CD14-positive monocyte (primary cell): ENCODE measurements at regions of chr1 and their contacts with region 1.

Region 1: DNA sequence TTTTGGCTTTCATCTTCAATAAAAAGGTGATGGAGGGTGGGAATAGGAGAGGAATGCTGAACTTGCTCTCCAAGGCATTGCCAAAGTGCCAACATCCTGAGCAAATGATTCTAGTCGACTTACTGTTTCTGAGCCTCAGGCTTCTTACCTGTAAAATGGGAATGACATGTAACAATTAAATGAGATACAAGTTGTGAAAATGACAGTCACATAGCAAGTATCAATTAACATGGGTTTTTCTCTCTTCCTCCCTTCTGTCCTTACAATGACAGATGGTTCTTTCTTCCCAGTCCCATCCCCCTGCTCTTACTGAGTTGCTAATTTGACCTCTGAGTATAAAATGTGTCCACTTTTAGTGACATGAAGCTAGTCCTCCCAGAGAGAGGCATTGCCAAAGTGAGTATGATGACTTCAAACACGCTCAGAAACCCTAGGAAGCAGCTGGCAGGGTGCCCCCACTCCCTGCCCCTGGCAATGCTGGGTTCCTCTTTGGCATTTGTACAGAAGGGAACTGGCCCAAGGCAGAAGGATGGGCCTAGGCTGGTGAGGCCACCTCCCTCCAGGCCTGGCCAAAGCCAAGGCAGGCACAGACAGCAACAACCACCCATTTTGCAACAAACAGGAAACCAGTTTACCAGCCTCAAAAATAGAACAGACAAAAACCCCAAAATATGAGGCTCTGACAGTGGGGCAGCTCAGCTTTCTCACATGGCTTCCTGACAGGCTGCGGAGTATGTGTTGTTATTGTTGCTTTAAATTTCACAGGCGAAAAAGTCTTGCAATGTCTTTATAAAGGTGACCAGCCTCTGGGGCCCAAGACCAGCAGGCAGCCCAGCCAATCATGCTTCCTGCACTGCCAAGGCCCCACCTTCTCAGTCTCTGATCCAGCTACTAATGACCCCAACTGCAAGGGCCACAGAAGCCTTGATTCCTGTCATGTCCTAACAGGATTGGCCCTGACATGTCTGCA is 115.9 kb downstream of the HIVEP3 start:
- DNase-seq: peak; percentile 88 to 94 (median 93)
- H3K4me3 ChIP-seq: peak overlapping the region in 1 of 3 experiments; percentile 52
- H3K4me3 Mint-ChIP-seq: peak overlapping the region; percentile 55 to 68
- H3K27ac ChIP-seq: peak overlapping the region; percentile 86 to 95
- H3K27ac Mint-ChIP-seq: peak overlapping the region; percentile 93 to 98 (median 96)
- H3K4me1 ChIP-seq: peaks cover 62 to 78% of the 10 kb centered on the region in 2 donors
- H3K4me1 Mint-ChIP-seq: peaks cover 82% of the 10 kb centered on the region
- H3K27me3 ChIP-seq: no peaks in the 10 kb centered on the region
- H3K27me3 Mint-ChIP-seq: no peaks in the 10 kb centered on the region
- CTCF ChIP-seq: no peak

Region 2: GRCh38 chr1:41626616-41627375 is 176.0 kb before region 1 on chr1:
- intact Hi-C with region 1: no loop called
- DNase-seq: peak in 1 of 3 donors; percentile 21
- H3K4me3 ChIP-seq: no peak overlapping the region
- H3K4me3 Mint-ChIP-seq: no peak overlapping the region
- H3K27ac ChIP-seq: no peak overlapping the region
- H3K27ac Mint-ChIP-seq: peak overlapping the region in 3 of 7 donors; percentile 34 to 66 (median 46)
- H3K4me1 ChIP-seq: peaks cover 8 to 11% of the 10 kb centered on the region in 2 donors
- H3K4me1 Mint-ChIP-seq: peaks cover 20% of the 10 kb centered on the region
- H3K27me3 ChIP-seq: no peaks in the 10 kb centered on the region
- H3K27me3 Mint-ChIP-seq: peaks cover 0 to 3% (median 2%) of the 10 kb centered on the region in 3 donors
- CTCF ChIP-seq: no peak

Region 3: DNA sequence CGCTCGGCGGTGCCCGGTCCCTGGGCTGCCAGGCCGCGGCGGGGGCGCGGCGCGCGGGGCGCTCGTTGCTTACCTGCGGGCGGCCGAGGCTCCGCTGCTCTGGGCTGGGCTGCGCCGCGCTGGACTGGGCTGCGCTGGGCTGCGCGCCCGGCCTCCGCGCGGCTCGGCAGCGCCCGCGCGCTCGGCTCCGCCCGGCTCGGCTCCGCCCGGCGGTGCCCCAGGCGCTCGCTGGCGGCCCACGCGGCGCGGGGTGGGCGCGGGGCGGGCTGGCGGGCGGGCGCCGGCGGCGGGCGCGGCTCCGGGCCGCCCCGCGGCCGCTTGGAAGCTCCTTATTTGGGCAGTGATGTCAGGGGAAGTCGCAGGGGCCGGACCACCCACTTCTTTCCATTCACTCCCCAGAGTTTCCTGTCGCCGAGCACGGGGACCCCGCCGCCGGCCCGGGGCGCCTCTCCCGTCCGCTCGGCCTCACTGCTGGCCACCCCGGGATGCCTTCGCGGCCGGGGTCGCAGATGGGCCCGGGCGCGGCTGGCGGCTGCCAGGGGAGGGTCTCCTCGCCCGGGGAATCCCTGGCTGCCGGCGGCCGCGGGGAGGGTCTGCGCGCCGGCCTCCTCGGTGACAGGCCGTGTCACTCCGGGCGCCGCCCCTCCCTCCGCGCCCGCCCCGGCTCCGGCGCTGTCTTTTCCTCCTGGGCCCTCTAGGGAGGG is 140.6 kb before region 1 on chr1:
- intact Hi-C with region 1: loop called in 1 of 2 experiments (anchors 5 kb)
- DNase-seq: peak; percentile 47 to 61 (median 59)
- H3K4me3 ChIP-seq: peak overlapping the region; percentile 43 to 76 (median 75)
- H3K4me3 Mint-ChIP-seq: peak overlapping the region; percentile 15 to 52
- H3K27ac ChIP-seq: peak overlapping the region in 1 of 2 donors; percentile 69
- H3K27ac Mint-ChIP-seq: peak overlapping the region in 1 of 7 donors; percentile 74
- H3K4me1 ChIP-seq: peaks cover 60 to 66% of the 10 kb centered on the region in 2 donors
- H3K4me1 Mint-ChIP-seq: peaks cover 64% of the 10 kb centered on the region
- H3K27me3 ChIP-seq: no peaks in the 10 kb centered on the region
- H3K27me3 Mint-ChIP-seq: peaks cover 7 to 18% (median 11%) of the 10 kb centered on the region in 3 donors
- CTCF ChIP-seq: no peak

Region 4: GRCh38 chr1:41698916-41699860 is 103.6 kb before region 1 on chr1:
- intact Hi-C with region 1: no loop called
- DNase-seq: peak in 1 of 3 donors; percentile 24
- H3K4me3 ChIP-seq: no peak overlapping the region
- H3K4me3 Mint-ChIP-seq: no peak overlapping the region
- H3K27ac ChIP-seq: no peak overlapping the region
- H3K27ac Mint-ChIP-seq: peak overlapping the region in 1 of 7 donors; percentile 20
- H3K4me1 ChIP-seq: peaks cover 17 to 20% of the 10 kb centered on the region in 2 donors
- H3K4me1 Mint-ChIP-seq: peaks cover 23% of the 10 kb centered on the region
- H3K27me3 ChIP-seq: no peaks in the 10 kb centered on the region
- H3K27me3 Mint-ChIP-seq: peaks cover 1 to 4% (median 3%) of the 10 kb centered on the region in 3 donors
- CTCF ChIP-seq: no peak

Region 5: DNA sequence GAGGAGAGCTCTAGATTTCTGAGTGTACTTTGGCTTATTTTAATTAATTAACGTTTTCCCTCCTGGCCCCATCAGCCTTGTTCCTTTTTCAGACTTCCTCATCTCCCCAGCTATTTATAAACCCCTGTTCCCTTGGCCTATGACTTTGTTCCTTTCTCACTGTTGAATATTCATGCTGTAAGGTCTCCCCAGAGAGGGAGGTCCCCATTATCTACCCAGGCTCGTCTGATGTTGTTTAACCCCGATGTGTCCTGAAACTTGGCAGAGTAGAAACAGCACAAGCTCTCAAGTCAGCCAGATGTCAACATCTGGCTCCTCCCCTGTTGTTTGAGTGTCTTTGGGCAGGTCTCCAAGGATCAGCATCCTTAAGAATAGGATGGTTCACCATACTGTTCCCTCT is 37.7 kb before region 1 on chr1:
- intact Hi-C with region 1: loop called (anchors 5 kb)
- DNase-seq: peak; percentile 69 to 81 (median 77)
- H3K4me3 ChIP-seq: peak overlapping the region; percentile 19 to 66 (median 26)
- H3K4me3 Mint-ChIP-seq: peak overlapping the region; percentile 65 to 73
- H3K27ac ChIP-seq: peak overlapping the region; percentile 84 to 94
- H3K27ac Mint-ChIP-seq: peak overlapping the region; percentile 94 to 98 (median 96)
- H3K4me1 ChIP-seq: peaks cover 71 to 82% of the 10 kb centered on the region in 2 donors
- H3K4me1 Mint-ChIP-seq: peaks cover 86% of the 10 kb centered on the region
- H3K27me3 ChIP-seq: no peaks in the 10 kb centered on the region
- H3K27me3 Mint-ChIP-seq: peaks cover 0 to 2% (median 0%) of the 10 kb centered on the region in 3 donors
- CTCF ChIP-seq: no peak

Region 6: DNA sequence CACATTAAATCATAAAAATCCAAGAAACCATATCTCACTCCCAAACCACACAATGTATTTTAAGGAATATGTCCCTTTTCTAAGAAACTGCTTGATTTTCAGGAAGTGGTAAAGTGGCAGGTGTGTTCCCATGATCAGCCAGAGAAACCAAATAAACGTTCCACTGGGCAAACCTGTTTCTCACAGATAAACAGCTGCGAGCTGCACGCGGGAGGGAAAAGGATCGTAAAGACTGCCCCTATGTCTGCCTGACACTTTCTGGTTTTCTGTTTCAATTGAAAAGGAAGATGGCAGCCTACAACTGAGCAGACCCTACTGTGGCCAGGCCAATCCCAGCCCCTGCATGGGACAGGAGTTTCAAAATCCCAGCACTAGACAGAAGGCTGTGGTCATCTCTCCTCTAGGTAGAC is 79.3 kb after region 1 on chr1:
- intact Hi-C with region 1: no loop called
- DNase-seq: no peak
- H3K4me3 ChIP-seq: no peak overlapping the region
- H3K4me3 Mint-ChIP-seq: no peak overlapping the region
- H3K27ac ChIP-seq: no peak overlapping the region
- H3K27ac Mint-ChIP-seq: no peak overlapping the region
- H3K4me1 ChIP-seq: peaks cover 0 to 2% of the 10 kb centered on the region in 2 donors
- H3K4me1 Mint-ChIP-seq: peaks cover 5% of the 10 kb centered on the region
- H3K27me3 ChIP-seq: no peaks in the 10 kb centered on the region
- H3K27me3 Mint-ChIP-seq: peaks cover 0 to 3% (median 0%) of the 10 kb centered on the region in 3 donors
- CTCF ChIP-seq: no peak

Region 7: DNA sequence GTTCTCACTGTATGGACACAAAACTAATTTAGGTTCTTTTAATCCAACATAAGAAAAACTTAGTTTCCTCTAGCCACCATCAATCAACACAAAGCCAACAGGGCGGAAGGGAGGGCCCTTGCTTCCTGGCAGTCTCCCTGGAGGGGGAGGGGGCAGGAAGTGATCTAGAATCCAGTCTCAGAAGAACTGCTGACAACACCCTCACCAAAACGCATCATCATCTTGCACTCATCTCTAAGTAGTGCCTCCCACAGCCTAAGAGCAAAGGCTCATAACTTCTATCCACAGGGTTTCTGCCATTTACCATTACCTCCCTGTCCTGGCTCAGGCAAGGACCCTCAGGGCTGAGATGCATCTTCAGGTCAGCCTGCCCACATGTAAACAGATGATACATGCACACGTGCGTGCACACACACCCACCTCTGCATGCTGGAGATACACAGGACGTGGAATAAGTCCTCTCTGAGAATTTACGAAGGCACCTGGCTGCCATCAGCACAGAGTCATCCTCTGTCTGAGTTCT is 95.4 kb after region 1 on chr1:
- intact Hi-C with region 1: no loop called
- DNase-seq: peak; percentile 17 to 24 (median 23)
- H3K4me3 ChIP-seq: no peak overlapping the region
- H3K4me3 Mint-ChIP-seq: no peak overlapping the region
- H3K27ac ChIP-seq: no peak overlapping the region
- H3K27ac Mint-ChIP-seq: peak overlapping the region in 3 of 7 donors; percentile 6 to 37 (median 27)
- H3K4me1 ChIP-seq: peaks cover 18% of the 10 kb centered on the region in 2 donors
- H3K4me1 Mint-ChIP-seq: peaks cover 26% of the 10 kb centered on the region
- H3K27me3 ChIP-seq: no peaks in the 10 kb centered on the region
- H3K27me3 Mint-ChIP-seq: peaks cover 0 to 3% (median 1%) of the 10 kb centered on the region in 3 donors
- CTCF ChIP-seq: no peak

Region 8: GRCh38 chr1:42035830-42036604 is 233.2 kb after region 1 on chr1:
- intact Hi-C with region 1: loop called in 1 of 2 experiments (anchors 10 kb)
- DNase-seq: peak; percentile 90 to 93 (median 92)
- H3K4me3 ChIP-seq: peak overlapping the region; percentile 52 to 88 (median 52)
- H3K4me3 Mint-ChIP-seq: peak overlapping the region; percentile 75 to 89
- H3K27ac ChIP-seq: no peak overlapping the region
- H3K27ac Mint-ChIP-seq: no peak overlapping the region
- H3K4me1 ChIP-seq: peaks cover 15 to 20% of the 10 kb centered on the region in 2 donors
- H3K4me1 Mint-ChIP-seq: peaks cover 16% of the 10 kb centered on the region
- H3K27me3 ChIP-seq: peaks cover 0 to 8% of the 10 kb centered on the region in 2 donors
- H3K27me3 Mint-ChIP-seq: peaks cover 7 to 12% (median 9%) of the 10 kb centered on the region in 3 donors
- CTCF ChIP-seq: no peak